Activated CD4-positive, alpha-beta memory T cell treated with anti-CD3 and anti-CD28 coated beads for 36 hours (primary cell): ENCODE measurements at regions of chr13 and their contacts with region 1.

Region 1: GRCh38 chr13:79393564-79394249 is 12.3 kb downstream of the RBM26 start:
- DNase-seq: peak; percentile 38
- H3K4me3 Mint-ChIP-seq: peak overlapping the region; percentile 18
- H3K27ac Mint-ChIP-seq: peak overlapping the region; percentile 82
- H3K4me1 Mint-ChIP-seq: peaks cover 63% of the 10 kb centered on the region
- H3K27me3 Mint-ChIP-seq: no peaks in the 10 kb centered on the region

Region 2: GRCh38 chr13:78603240-78603957 is 790.3 kb before region 1 on chr13 and contains the start of gene POU4F1:
- CTCF ChIA-PET with region 1: no interaction called
- POLR2A ChIA-PET with region 1: no interaction called
- intact Hi-C with region 1: loop called (anchors 5 kb)
- DNase-seq: peak; percentile 88
- H3K4me3 Mint-ChIP-seq: peak within 1 kb of the TSS; percentile 74
- H3K27ac Mint-ChIP-seq: peak within 1 kb of the TSS; percentile 6
- H3K4me1 Mint-ChIP-seq: peaks cover 49% of the 10 kb centered on the region
- H3K27me3 Mint-ChIP-seq: peaks cover 81% of the 10 kb centered on the region
- total RNA-seq, gene POU4F1: 0.07 to 0.17 TPM

Region 3: GRCh38 chr13:78897200-78897599 is 496.5 kb before region 1 on chr13:
- CTCF ChIA-PET with region 1: no interaction called
- POLR2A ChIA-PET with region 1: no interaction called
- intact Hi-C with region 1: no loop called
- DNase-seq: no peak
- H3K4me3 Mint-ChIP-seq: no peak overlapping the region
- H3K27ac Mint-ChIP-seq: no peak overlapping the region
- H3K4me1 Mint-ChIP-seq: no peaks in the 10 kb centered on the region
- H3K27me3 Mint-ChIP-seq: no peaks in the 10 kb centered on the region

Region 4: GRCh38 chr13:78978381-78978998 is 415.2 kb before region 1 on chr13:
- CTCF ChIA-PET with region 1: interaction called, 13 read pairs
- POLR2A ChIA-PET with region 1: no interaction called
- intact Hi-C with region 1: no loop called
- DNase-seq: no peak
- H3K4me3 Mint-ChIP-seq: no peak overlapping the region
- H3K27ac Mint-ChIP-seq: no peak overlapping the region
- H3K4me1 Mint-ChIP-seq: no peaks in the 10 kb centered on the region
- H3K27me3 Mint-ChIP-seq: peaks cover 4% of the 10 kb centered on the region

Region 5: DNA sequence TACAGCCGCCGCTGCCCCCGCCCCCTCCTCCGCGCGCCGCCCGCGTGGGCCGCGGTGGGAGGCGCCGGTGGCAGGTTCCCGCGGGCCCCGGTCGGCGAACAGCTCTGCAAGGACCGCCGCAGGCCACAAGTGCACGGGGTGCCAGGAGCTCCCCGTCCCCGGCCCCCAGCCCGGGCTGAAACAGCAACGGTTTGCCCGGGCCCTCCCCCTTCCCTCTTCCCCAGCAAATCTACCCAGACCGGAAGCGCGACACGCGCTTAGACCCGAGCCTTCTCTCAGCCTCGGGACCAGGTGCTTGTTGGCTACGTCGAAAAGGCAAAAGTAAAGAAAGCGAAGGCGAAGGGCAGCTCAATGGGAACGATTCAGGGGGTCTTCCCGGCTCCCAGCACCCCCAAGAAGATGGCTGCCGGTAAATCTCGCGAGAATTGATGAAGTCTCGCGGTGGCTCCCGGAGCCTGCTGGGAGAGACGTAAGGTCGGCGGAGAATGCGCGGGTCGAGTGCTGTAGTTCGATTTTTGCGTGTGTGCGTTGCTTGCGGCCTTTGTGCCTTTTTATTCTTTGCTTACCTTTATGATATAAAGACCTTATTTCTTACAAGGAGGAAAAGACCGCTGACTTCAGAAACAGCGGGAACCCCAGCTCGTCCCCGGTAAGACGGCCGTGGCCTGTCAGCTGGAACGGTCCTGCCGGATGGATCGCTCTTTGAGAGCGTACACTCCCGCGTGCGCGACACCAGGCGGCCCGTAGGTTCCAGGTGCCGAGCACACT is 12.3 kb after region 1 on chr13 and contains the start of gene RBM26:
- CTCF ChIA-PET with region 1: interaction called, 29 read pairs
- POLR2A ChIA-PET with region 1: interaction called, 14 read pairs
- intact Hi-C with region 1: loop called (anchors 1 kb)
- DNase-seq: peak; percentile 96
- H3K4me3 Mint-ChIP-seq: peak within 1 kb of the TSS; percentile 88
- H3K27ac Mint-ChIP-seq: no peak within 1 kb of the TSS
- H3K4me1 Mint-ChIP-seq: peaks cover 38% of the 10 kb centered on the region
- H3K27me3 Mint-ChIP-seq: no peaks in the 10 kb centered on the region
- total RNA-seq, gene RBM26: 54.8 to 57.7 TPM